ENCODE measurements at regions of chr4 and their contacts with region 1.

Region 1: GRCh38 chr4:147096667-147097604 is 151.3 kb upstream of the TTC29 start:
- DNase-seq: peak in 6 of 9 donors; percentile 12 to 57 (median 40)
- ATAC-seq: peak; percentile 41
- H3K4me3 ChIP-seq: no peak overlapping the region
- H3K4me3 Mint-ChIP-seq: no peak overlapping the region
- H3K27ac ChIP-seq: no peak overlapping the region
- H3K27ac Mint-ChIP-seq: no peak overlapping the region
- H3K4me1 ChIP-seq: no peaks in the 10 kb centered on the region
- H3K4me1 Mint-ChIP-seq: no peaks in the 10 kb centered on the region
- H3K27me3 ChIP-seq: no peaks in the 10 kb centered on the region
- H3K27me3 Mint-ChIP-seq: peaks cover 14 to 26% (median 17%) of the 10 kb centered on the region in 5 donors

Region 2: GRCh38 chr4:145956288-145956890 is 1140.5 kb before region 1 on chr4:
- CTCF ChIA-PET with region 1: interaction called, 3 read pairs
- POLR2A ChIA-PET with region 1: no interaction called
- intact Hi-C with region 1: loop called (anchors 1 to 10 kb)
- DNase-seq: peak in 7 of 9 donors; percentile 22 to 43 (median 28)
- ATAC-seq: peak; percentile 70
- H3K4me3 ChIP-seq: no peak overlapping the region
- H3K4me3 Mint-ChIP-seq: no peak overlapping the region
- H3K27ac ChIP-seq: no peak overlapping the region
- H3K27ac Mint-ChIP-seq: no peak overlapping the region
- H3K4me1 ChIP-seq: no peaks in the 10 kb centered on the region
- H3K4me1 Mint-ChIP-seq: peaks cover 0 to 4% (median 0%) of the 10 kb centered on the region in 7 donors
- H3K27me3 ChIP-seq: no peaks in the 10 kb centered on the region
- H3K27me3 Mint-ChIP-seq: peaks cover 0 to 9% (median 5%) of the 10 kb centered on the region in 5 donors

Region 3: DNA sequence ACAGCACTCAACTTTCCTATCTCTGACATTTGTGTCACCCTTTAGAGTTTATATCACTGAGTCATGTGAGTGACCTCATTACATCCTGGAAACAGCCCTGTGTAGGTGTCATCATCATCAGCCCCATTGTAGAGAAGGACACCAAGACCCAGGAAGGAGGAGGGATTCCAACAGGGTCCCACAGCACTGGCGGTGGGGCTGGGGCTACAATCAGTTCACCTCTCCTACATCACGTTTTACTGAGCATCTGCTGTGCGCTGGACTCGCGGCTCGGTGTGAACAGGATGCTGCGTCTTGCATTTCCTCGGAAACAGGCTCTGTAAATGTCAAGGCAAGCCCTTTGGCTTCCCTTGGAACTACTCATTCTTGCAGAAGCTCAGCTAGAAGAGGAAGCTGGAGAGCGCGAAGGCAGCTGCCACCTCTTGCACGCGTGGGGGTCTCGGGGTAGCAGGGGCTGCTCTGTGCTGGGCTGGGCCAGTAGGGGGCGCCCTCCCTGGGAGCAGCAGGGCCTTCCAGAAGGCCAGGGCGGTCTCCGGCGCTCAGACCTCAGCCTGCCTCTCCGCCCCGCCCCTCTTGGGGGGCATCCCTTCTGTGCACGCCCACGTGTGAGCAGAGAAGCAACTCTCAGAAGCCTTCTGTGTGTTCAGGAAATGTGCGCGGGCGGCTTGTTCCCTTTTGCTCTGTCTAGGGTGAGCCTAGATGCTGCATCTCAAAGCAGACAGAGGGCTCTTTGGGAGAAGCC is 853.6 kb before region 1 on chr4:
- CTCF ChIA-PET with region 1: interaction called, 7 read pairs
- POLR2A ChIA-PET with region 1: no interaction called
- intact Hi-C with region 1: loop called in 1 of 2 experiments (anchors 1 kb)
- DNase-seq: peak in 8 of 9 donors; percentile 10 to 76 (median 31)
- ATAC-seq: peak; percentile 59
- H3K4me3 ChIP-seq: peak overlapping the region; percentile 3
- H3K4me3 Mint-ChIP-seq: peak overlapping the region; percentile 36 to 72 (median 60)
- H3K27ac ChIP-seq: no peak overlapping the region
- H3K27ac Mint-ChIP-seq: peak overlapping the region in 1 of 9 donors; percentile 32
- H3K4me1 ChIP-seq: peaks cover 0 to 10% of the 10 kb centered on the region in 2 donors
- H3K4me1 Mint-ChIP-seq: peaks cover 4 to 15% (median 13%) of the 10 kb centered on the region in 7 donors
- H3K27me3 ChIP-seq: no peaks in the 10 kb centered on the region
- H3K27me3 Mint-ChIP-seq: peaks cover 0 to 9% (median under 1%) of the 10 kb centered on the region in 5 donors

Region 4: GRCh38 chr4:146916479-146917076 is 180.4 kb before region 1 on chr4:
- CTCF ChIA-PET with region 1: no interaction called
- POLR2A ChIA-PET with region 1: no interaction called
- intact Hi-C with region 1: loop called in 1 of 2 experiments (anchors 10 kb)
- DNase-seq: peak in 5 of 9 donors; percentile 3 to 19 (median 18)
- ATAC-seq: no peak
- H3K4me3 ChIP-seq: no peak overlapping the region
- H3K4me3 Mint-ChIP-seq: no peak overlapping the region
- H3K27ac ChIP-seq: no peak overlapping the region
- H3K27ac Mint-ChIP-seq: no peak overlapping the region
- H3K4me1 ChIP-seq: no peaks in the 10 kb centered on the region
- H3K4me1 Mint-ChIP-seq: no peaks in the 10 kb centered on the region
- H3K27me3 ChIP-seq: peaks cover 0 to 3% of the 10 kb centered on the region in 2 donors
- H3K27me3 Mint-ChIP-seq: peaks cover 0 to 20% (median 13%) of the 10 kb centered on the region in 5 donors

Measured in naive thymus-derived CD4-positive, alpha-beta T cell (primary cell).